ENCODE measurements at regions of chr17 and their contacts with region 1.

Region 1: DNA sequence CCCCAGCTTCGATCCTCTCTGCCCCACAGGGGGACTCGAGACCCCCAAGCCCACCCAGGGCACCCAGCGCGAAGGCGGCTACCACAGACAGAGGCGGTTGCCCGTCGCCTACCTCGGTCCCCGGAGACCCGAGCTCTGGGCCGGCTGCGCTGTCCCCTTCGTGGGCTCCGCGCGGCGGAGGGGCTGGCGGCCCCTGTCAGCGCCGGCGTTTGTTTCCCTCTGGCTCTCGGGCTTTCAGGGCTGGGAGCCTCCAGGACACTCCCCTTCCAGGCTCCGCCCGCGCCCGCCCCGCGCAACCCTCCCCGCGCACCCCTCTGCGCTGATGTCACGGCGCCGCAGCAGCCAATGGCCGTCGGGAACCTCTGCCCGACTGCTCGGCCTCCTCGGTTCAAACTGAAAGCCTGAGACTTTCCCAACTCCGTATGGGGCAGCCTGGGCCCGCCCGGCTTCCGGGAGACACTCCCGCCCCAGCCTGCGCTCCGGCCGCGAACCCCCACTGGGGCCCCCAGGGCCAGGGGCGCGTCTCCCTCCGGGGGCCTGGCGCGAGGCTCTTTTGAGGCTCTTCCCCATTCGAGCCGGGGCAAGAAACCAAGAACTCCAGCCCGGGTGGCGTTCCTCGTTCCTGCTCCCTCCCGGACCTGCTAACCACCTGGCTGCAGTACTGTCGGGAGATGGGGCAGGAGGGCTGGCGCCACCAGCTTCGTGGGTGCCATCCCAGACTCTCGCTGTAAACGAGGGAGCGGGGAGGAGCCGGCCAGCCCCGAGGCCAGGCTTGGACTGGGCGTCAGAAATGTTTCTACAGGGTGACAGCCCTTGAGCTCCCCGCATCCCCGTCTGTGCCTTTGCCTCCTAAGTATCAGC is at the start of gene CDC42EP4:
- DNase-seq: peak; percentile 96 to 98
- H3K4me3 ChIP-seq: peak within 1 kb of the TSS; percentile 93 to 99 (median 97)
- H3K27ac ChIP-seq: peak within 1 kb of the TSS; percentile 99
- H3K4me1 ChIP-seq: peaks cover 0 to 1% of the 10 kb centered on the region in 2 donors
- H3K27me3 ChIP-seq: no peaks in the 10 kb centered on the region
- CTCF ChIP-seq: peak in 1 of 3 donors; percentile 8
- POLR2A ChIP-seq: peak; percentile 97
- total RNA-seq, gene CDC42EP4: 71.0 to 141 (median 112) TPM

Region 2: GRCh38 chr17:73359987-73360410 is 48.0 kb after region 1 on chr17:
- intact Hi-C with region 1: loop called (anchors 10 kb)
- DNase-seq: peak; percentile 82 to 92
- H3K4me3 ChIP-seq: peak overlapping the region in 1 of 3 donors; percentile 23
- H3K27ac ChIP-seq: peak overlapping the region; percentile 72 to 79
- H3K4me1 ChIP-seq: peaks cover 6 to 14% of the 10 kb centered on the region in 2 donors
- H3K27me3 ChIP-seq: no peaks in the 10 kb centered on the region
- CTCF ChIP-seq: no peak
- POLR2A ChIP-seq: no peak

Measured in breast epithelium (tissue), 4 donors.